ENCODE measurements at regions of chr14 and their contacts with region 1.

Region 1: GRCh38 chr14:104639889-104640548 is 35.4 kb upstream of the TMEM179 start:
- DNase-seq: peak; percentile 63 to 85
- H3K4me3 ChIP-seq: no peak overlapping the region
- H3K4me1 ChIP-seq: no peaks in the 10 kb centered on the region
- H3K27me3 ChIP-seq: peaks cover 19% of the 10 kb centered on the region

Region 2: GRCh38 chr14:104078031-104078455 is 562.0 kb before region 1 on chr14:
- in situ Hi-C with region 1: loop called (anchors 5 kb)
- DNase-seq: peak; percentile 85 to 91
- H3K4me3 ChIP-seq: no peak overlapping the region
- H3K4me1 ChIP-seq: no peaks in the 10 kb centered on the region
- H3K27me3 ChIP-seq: no peaks in the 10 kb centered on the region

Region 3: DNA sequence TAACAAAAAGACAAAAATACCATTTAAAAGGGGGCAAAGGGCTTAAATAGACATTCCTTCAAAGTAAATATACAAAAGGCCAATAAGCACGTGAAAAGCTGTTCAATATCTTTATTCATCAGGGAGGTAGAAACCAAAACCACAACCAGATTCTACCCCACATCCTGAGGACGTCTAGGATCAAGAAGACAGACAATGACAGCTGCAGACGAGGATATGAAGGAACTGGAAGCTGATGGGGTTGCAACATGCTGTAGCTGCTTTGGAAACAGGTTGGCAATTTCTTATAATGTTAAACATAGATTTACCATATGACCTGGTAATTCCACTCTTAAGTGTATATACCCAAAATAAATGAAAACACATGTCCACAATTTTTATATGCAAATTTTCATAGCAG is 145.5 kb before region 1 on chr14:
- in situ Hi-C with region 1: no loop called
- DNase-seq: no peak
- H3K4me3 ChIP-seq: no peak overlapping the region
- H3K4me1 ChIP-seq: no peaks in the 10 kb centered on the region
- H3K27me3 ChIP-seq: peaks cover 6% of the 10 kb centered on the region; the same call in 1 of the 2 replicates